Activated CD8-positive, alpha-beta T cell treated with anti-CD3 and anti-CD28 coated beads for 36 hours (primary cell): ENCODE measurements at regions of chr4 and their contacts with region 1.

Region 1: GRCh38 chr4:159212675-159213293 is 109.9 kb downstream of the RAPGEF2 start:
- DNase-seq: no peak
- ATAC-seq: no peak
- H3K4me3 Mint-ChIP-seq: no peak overlapping the region
- H3K27ac Mint-ChIP-seq: no peak overlapping the region
- H3K4me1 Mint-ChIP-seq: peaks cover 8% of the 10 kb centered on the region
- H3K27me3 Mint-ChIP-seq: no peaks in the 10 kb centered on the region
- CTCF ChIP-seq: no peak

Region 2: DNA sequence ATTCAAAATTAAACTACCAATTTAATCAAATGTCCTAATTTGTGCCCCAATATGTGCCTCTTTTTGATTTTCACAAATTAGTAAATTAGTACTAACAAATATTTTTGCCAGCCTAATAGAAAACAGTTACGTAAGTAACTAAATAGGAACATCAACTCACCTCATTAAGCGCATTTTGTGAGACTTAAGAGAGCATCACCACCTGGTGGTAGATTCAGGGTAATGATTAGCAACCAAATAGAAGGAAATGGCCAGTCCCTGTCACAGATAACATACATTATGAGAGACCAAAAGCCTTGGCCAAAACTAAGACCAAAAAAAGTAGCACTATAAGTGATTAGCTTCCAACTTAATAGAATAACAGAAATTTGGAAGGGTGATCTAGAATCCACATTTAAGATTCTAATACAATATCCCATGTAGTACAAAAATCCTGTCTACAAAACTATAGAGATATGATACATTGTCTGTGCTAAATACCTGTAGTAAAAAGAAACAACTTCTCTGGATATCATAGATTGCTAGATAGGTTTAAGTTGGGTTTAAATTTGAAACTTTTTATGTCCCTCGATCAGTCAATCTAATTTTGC is 587.8 kb before region 1 on chr4:
- CTCF ChIA-PET with region 1: no interaction called
- POLR2A ChIA-PET with region 1: no interaction called
- intact Hi-C with region 1: no loop called
- DNase-seq: no peak
- ATAC-seq: peak; percentile 58
- H3K4me3 Mint-ChIP-seq: no peak overlapping the region
- H3K27ac Mint-ChIP-seq: no peak overlapping the region
- H3K4me1 Mint-ChIP-seq: no peaks in the 10 kb centered on the region
- H3K27me3 Mint-ChIP-seq: no peaks in the 10 kb centered on the region
- CTCF ChIP-seq: peak; percentile 59

Region 3: GRCh38 chr4:159201168-159201567 is 11.6 kb before region 1 on chr4:
- CTCF ChIA-PET with region 1: interaction called, 11 read pairs
- POLR2A ChIA-PET with region 1: no interaction called
- intact Hi-C with region 1: no loop called
- DNase-seq: no peak
- ATAC-seq: no peak
- H3K4me3 Mint-ChIP-seq: no peak overlapping the region
- H3K27ac Mint-ChIP-seq: no peak overlapping the region
- H3K4me1 Mint-ChIP-seq: peaks cover 27% of the 10 kb centered on the region
- H3K27me3 Mint-ChIP-seq: no peaks in the 10 kb centered on the region
- CTCF ChIP-seq: no peak